ENCODE measurements at regions of chr4 and their contacts with region 1.

Region 1: DNA sequence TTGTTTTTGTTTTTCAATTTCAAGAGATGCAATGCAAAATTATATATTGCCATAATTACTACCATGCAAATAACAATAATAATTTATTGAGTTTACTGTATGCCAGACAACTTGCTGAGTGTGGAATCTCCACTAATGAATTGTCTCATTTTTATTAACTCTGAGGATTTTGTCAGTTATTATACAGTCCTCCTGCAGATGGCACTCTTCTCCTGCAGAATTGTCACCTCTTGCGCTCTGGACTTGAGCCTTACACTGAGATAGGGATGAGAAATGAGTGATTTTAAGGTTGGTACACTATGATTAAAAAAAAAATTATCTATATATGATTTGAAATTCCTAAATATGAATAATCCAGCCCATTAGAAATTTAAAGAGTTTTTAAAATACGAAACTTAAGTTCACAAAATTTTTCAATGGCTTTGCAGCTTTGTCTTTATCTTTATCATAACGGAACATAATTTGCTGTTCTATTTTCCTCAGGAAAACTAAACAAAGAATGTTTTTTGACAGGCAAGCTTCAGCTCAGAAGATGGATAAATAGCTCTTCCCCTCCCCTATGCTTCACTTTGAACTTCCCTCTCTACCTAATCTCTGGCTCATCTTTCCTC is 12.7 kb upstream of the PAQR3 start:
- DNase-seq: no peak
- H3K4me3 ChIP-seq: no peak overlapping the region
- H3K27ac ChIP-seq: no peak overlapping the region
- H3K4me1 ChIP-seq: no peaks in the 10 kb centered on the region
- H3K27me3 ChIP-seq: no peaks in the 10 kb centered on the region
- CTCF ChIP-seq: peak in 2 of 3 experiments; percentile 57 to 59; a peak in 3 of 4 replicates
- EP300 ChIP-seq: no peak
- POLR2A ChIP-seq: no peak
- RAD21 ChIP-seq: peak; percentile 88 to 89

Region 2: DNA sequence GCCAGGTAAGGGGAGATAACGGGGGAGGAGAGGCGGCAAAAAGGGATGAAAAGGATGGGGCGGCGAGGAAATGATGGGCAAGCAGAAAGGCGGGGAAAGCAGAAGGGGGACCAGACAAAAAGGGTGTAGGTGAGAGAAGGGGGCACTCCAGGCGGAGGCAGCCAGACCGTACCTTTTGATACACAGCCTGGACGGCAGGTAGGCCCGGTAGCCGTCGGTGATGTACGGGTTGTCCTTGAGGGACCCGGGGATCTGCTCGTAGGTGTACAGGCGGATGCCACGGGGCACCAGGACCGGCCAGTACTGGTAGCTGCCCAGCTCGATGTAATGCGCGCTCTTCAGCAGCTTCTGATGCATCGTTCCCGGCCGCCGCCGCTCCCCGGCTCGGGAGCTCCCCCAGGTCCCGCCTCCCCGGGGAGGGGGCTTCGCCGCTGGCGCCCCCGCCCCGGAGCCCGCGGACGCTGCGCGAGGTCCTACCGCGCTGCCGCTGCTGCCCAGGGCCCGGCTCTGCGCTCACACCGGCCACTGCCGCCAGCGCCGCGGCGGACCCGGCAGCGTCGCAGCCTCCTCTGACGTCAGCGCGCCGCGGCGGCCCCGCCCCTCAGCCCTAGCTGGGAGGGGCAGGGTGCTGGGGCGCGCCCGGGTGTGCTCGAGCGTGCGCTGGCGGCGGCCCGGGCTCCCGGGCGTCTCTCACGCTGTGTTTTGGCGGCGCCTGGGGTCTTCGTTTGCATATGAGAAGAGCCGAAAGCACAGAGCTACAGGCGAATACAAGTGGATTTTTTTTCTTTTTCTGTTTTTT is 12.9 kb before region 1 on chr4 and contains the start of gene PAQR3:
- CTCF ChIA-PET with region 1: interaction called, 13 read pairs
- POLR2A ChIA-PET with region 1: interaction called, 3 read pairs
- DNase-seq: peak; percentile 58 to 91
- H3K4me3 ChIP-seq: peak within 1 kb of the TSS; percentile 61 to 95 (median 86)
- H3K27ac ChIP-seq: peak within 1 kb of the TSS; percentile 79
- H3K4me1 ChIP-seq: peaks cover 0 to 14% (median 3%) of the 10 kb centered on the region in 4 experiments; a peak in 3 of 7 replicates
- H3K27me3 ChIP-seq: peaks cover 0 to 13% (median 3%) of the 10 kb centered on the region in 4 experiments; a peak in 4 of 7 replicates
- CTCF ChIP-seq: peak in 1 of 3 experiments; percentile 0; a peak in 1 of 4 replicates
- EP300 ChIP-seq: 0 out of 3 replicates have a peak, but pooled peaks of 1 of the 2 experiments have one; percentile 49
- POLR2A ChIP-seq: peak; percentile 79 to 89
- RAD21 ChIP-seq: no peak; a peak in 1 of 4 replicates
- total RNA-seq, gene PAQR3: 29.5 and 35.2 TPM in 2 replicates

Region 3: DNA sequence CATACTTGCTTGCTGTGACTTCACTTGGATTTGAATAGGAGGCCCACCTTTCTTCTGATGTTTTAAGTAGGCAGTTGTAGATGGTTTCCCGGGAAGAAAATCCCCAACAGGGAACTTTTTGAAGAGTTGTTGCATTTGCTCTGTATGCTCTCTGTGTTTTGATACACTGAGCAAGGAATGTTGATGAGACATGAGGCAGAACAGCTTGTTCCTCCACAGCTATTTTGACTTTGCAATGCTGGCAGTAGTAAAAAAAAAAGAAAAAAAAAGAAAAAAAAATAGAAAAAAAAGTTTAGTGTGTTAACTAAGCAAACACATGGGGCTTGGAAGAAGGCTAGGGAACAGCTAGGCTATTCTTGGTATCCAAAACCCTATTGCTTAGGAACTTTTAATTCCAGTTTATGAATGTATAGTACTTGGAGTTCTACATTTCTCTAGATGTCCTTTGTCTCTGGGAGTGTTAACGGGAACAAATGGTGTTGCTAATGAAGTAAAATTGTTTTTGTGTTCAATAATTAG is 10.7 kb after region 1 on chr4:
- CTCF ChIA-PET with region 1: interaction called, 20 read pairs
- POLR2A ChIA-PET with region 1: no interaction called
- DNase-seq: no peak
- H3K4me3 ChIP-seq: no peak overlapping the region
- H3K27ac ChIP-seq: no peak overlapping the region
- H3K4me1 ChIP-seq: no peaks in the 10 kb centered on the region
- H3K27me3 ChIP-seq: no peaks in the 10 kb centered on the region
- CTCF ChIP-seq: no peak
- EP300 ChIP-seq: no peak
- POLR2A ChIP-seq: no peak
- RAD21 ChIP-seq: no peak

Region 4: DNA sequence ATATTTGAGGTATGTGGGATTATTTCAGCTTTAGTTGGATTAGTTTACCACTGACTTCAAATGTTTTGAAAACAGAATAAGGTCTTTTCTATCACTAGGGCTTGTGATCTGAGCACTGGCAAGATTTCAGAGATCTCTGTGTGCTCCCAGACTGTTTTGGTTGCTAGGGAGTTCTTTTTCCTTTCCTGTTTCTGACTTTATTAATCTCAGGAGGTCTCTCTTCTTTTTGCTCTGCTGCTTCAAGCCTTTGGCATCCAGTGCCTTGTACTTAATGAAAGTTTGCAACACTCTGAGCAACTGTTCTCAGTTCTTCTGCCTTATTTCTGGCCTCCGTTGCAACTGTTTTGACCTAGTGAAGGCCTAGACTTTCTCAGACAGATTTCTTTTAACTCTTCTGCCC is 19.4 kb after region 1 on chr4:
- CTCF ChIA-PET with region 1: interaction called, 18 read pairs
- POLR2A ChIA-PET with region 1: no interaction called
- DNase-seq: no peak
- H3K4me3 ChIP-seq: no peak overlapping the region
- H3K27ac ChIP-seq: no peak overlapping the region
- H3K4me1 ChIP-seq: 0 out of 7 replicates have a peak, but pooled peaks cover 0 to 2% (median 0%) of the 10 kb centered on the region in 4 experiments
- H3K27me3 ChIP-seq: no peaks in the 10 kb centered on the region
- CTCF ChIP-seq: no peak
- EP300 ChIP-seq: no peak
- POLR2A ChIP-seq: no peak
- RAD21 ChIP-seq: no peak

Region 5: GRCh38 chr4:79042079-79042674 is 90.2 kb after region 1 on chr4:
- CTCF ChIA-PET with region 1: interaction called, 12 read pairs
- POLR2A ChIA-PET with region 1: no interaction called
- DNase-seq: no peak
- H3K4me3 ChIP-seq: no peak overlapping the region
- H3K27ac ChIP-seq: no peak overlapping the region
- H3K4me1 ChIP-seq: no peaks in the 10 kb centered on the region
- H3K27me3 ChIP-seq: no peaks in the 10 kb centered on the region
- CTCF ChIP-seq: peak in 2 of 3 experiments; percentile 46 to 49; a peak in 3 of 4 replicates
- EP300 ChIP-seq: no peak
- POLR2A ChIP-seq: no peak
- RAD21 ChIP-seq: peak; percentile 81 to 82

Region 6: DNA sequence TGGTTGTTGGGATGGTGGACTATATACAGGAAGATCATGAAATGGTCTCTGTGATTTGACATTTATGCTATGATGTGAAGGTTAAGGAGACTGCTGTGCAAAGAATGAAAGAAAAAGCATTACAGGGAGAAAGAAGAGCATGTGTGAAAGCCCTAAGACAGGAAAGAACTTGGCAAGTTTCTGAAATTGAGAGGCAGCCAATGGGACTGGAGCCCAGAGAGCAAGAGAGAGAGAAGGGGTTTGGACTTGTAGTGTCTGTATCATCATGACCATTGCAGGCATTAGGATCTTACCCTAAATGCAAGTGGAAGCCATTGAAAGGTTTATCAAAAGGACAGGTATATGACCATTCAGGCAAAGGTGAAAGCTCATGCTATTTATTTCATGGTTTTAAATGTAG is 226.8 kb after region 1 on chr4:
- CTCF ChIA-PET with region 1: no interaction called
- POLR2A ChIA-PET with region 1: no interaction called
- DNase-seq: no peak
- H3K4me3 ChIP-seq: no peak overlapping the region
- H3K27ac ChIP-seq: no peak overlapping the region
- H3K4me1 ChIP-seq: no peaks in the 10 kb centered on the region
- H3K27me3 ChIP-seq: no peaks in the 10 kb centered on the region
- CTCF ChIP-seq: no peak
- EP300 ChIP-seq: no peak
- POLR2A ChIP-seq: no peak
- RAD21 ChIP-seq: no peak

Region 7: GRCh38 chr4:80335554-80336358 is 1383.8 kb after region 1 on chr4 and contains the start of gene CFAP299:
- CTCF ChIA-PET with region 1: interaction called, 13 read pairs
- POLR2A ChIA-PET with region 1: no interaction called
- DNase-seq: peak; percentile 68 to 94
- H3K4me3 ChIP-seq: peak within 1 kb of the TSS; percentile 50 to 85 (median 82)
- H3K27ac ChIP-seq: no peak within 1 kb of the TSS
- H3K4me1 ChIP-seq: no peaks in the 10 kb centered on the region; a peak in 1 of 7 replicates
- H3K27me3 ChIP-seq: peaks cover 0 to 11% (median 9%) of the 10 kb centered on the region in 4 experiments; a peak in 6 of 7 replicates
- CTCF ChIP-seq: peak; percentile 44 to 57 (median 48)
- EP300 ChIP-seq: no peak
- POLR2A ChIP-seq: no peak
- RAD21 ChIP-seq: peak; percentile 31 to 49; a peak in 3 of 4 replicates
- total RNA-seq, gene CFAP299: not detected in 2 replicates